CD4-positive, alpha-beta T cell (primary cell): ENCODE measurements at regions of chr17 and their contacts with region 1.

Region 1: DNA sequence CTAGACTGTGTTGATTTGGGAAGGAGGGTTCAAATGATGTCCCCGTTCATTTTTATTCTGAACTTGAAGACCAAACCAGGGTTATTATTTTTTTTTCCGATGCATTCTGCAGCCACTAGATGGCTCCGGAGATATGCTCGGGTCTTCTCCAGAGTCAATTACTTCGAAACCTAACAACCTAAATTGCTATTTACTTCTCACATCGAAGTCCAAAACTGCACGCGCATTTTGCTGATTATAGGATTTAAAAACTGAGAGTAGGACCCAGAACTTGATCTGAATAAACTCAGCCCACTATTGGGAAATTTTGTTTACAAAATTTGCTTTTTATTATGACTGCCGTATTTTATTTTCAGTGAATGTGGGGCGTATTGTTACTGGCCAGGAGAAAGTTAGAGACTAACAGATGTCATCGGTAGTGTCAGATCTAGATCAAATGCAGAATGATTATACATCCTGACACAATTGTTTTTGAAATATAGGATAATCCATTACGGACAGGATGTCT is 263.8 kb downstream of the HS3ST3A1 start:
- DNase-seq: peak in 4 of 14 experiments; percentile 7 to 36 (median 26)
- ATAC-seq: no peak
- H3K4me3 ChIP-seq: no peak overlapping the region
- H3K4me3 Mint-ChIP-seq: no peak overlapping the region
- H3K27ac ChIP-seq: no peak overlapping the region
- H3K27ac Mint-ChIP-seq: no peak overlapping the region
- H3K4me1 ChIP-seq: no peaks in the 10 kb centered on the region
- H3K4me1 Mint-ChIP-seq: peaks cover 6% of the 10 kb centered on the region
- H3K27me3 ChIP-seq: peaks cover 6 to 10% of the 10 kb centered on the region in 2 experiments
- H3K27me3 Mint-ChIP-seq: peaks cover 34% of the 10 kb centered on the region
- CTCF ChIP-seq: peak; percentile 61

Region 2: DNA sequence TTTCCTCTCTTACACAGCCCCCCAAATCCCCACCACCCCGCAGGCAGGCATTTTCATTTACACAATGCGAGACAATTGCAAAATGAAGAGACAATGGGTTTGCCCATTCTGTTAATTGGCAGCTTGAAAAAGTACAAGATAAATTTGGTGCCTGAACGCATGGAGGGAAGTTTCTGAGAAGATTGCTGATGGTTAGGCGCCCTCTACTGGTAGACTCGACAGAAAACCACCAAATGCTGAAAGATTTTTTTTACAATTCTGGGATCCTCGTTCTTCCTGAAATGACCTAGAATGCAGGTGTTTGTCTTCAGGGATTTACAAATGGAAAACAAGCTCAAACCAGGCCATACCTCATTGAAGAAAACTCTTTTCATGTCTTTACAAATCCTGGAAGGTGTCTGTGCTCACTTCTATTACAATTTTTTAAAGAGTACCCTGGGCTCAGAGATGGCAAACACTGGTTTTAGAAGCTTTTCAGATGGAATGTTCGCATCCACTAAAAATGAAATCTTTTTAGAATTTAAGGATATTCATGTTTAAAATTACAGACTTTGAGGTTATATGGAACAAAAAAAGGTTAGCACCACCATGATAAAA is 1588.7 kb after region 1 on chr17:
- CTCF ChIA-PET with region 1: interaction called, 3 read pairs
- POLR2A ChIA-PET with region 1: no interaction called
- intact Hi-C with region 1: loop called (anchors 1 to 2 kb)
- DNase-seq: peak in 13 of 14 experiments; percentile 20 to 82 (median 42)
- ATAC-seq: no peak
- H3K4me3 ChIP-seq: no peak overlapping the region
- H3K4me3 Mint-ChIP-seq: no peak overlapping the region
- H3K27ac ChIP-seq: no peak overlapping the region
- H3K27ac Mint-ChIP-seq: no peak overlapping the region
- H3K4me1 ChIP-seq: no peaks in the 10 kb centered on the region
- H3K4me1 Mint-ChIP-seq: no peaks in the 10 kb centered on the region
- H3K27me3 ChIP-seq: peaks cover 5 to 10% of the 10 kb centered on the region in 2 experiments
- H3K27me3 Mint-ChIP-seq: peaks cover 22% of the 10 kb centered on the region
- CTCF ChIP-seq: peak; percentile 85